CD8-positive, alpha-beta memory T cell (primary cell): ENCODE measurements at regions of chr2 and their contacts with region 1.

Region 1: GRCh38 chr2:127197475-127198385 is 22.4 kb downstream of the CYP27C1 start:
- DNase-seq: peak in 4 of 5 donors; percentile 19 to 63 (median 33)
- H3K4me3 ChIP-seq: no peak overlapping the region
- H3K4me3 Mint-ChIP-seq: peak overlapping the region; percentile 68 to 82 (median 79)
- H3K27ac ChIP-seq: no peak overlapping the region
- H3K27ac Mint-ChIP-seq: peak overlapping the region in 1 of 8 donors; percentile 5
- H3K4me1 ChIP-seq: no peaks in the 10 kb centered on the region
- H3K4me1 Mint-ChIP-seq: peaks cover 0 to 6% (median 0%) of the 10 kb centered on the region in 3 donors
- H3K27me3 ChIP-seq: no peaks in the 10 kb centered on the region
- H3K27me3 Mint-ChIP-seq: peaks cover 0 to 8% of the 10 kb centered on the region in 2 donors

Region 2: DNA sequence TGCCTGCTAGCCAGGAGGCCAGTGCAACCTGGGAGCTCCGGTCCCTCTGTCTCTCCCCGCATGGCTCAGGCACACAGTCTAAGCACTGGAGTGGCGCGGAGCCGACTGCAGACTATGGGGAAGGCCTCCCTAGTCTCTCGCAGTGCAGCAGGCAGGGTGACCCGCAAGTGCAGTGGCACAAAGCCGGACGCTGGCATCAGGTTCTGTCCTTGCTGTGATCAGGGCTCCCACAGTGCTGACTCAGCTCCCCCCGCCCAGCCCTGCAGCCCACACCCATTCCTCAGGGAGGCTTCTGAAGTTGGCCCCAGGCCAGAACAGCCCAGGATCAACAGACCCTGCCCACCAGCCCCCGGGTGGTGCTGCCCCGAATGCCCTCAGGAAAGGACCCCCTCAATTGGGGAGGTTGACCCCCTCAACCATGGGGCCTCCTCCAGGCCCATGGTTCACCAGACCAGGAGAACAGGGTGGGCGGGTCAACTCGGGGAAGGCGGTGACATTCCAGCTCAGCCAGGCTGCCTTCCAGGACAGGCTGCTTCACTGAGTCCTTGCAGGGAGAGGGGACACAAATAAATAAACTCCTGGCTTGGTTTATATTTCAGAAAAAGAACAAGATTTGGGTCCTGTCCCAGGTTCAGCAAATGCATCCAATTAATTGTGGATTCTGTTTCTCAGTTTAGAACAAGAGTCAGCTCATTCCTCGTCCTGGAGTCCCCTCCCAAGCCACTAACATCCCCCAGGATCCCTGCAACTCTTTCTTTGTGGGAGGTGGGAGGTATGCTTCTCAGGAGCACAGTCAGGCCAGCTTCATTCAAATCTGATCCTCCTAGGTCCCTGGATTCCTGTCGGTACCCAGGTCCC is 103.0 kb before region 1 on chr2:
- CTCF ChIA-PET with region 1: no interaction called
- POLR2A ChIA-PET with region 1: no interaction called
- DNase-seq: peak in 1 of 5 donors; percentile 42
- H3K4me3 ChIP-seq: no peak overlapping the region
- H3K4me3 Mint-ChIP-seq: no peak overlapping the region
- H3K27ac ChIP-seq: no peak overlapping the region
- H3K27ac Mint-ChIP-seq: no peak overlapping the region
- H3K4me1 ChIP-seq: no peaks in the 10 kb centered on the region
- H3K4me1 Mint-ChIP-seq: no peaks in the 10 kb centered on the region
- H3K27me3 ChIP-seq: no peaks in the 10 kb centered on the region
- H3K27me3 Mint-ChIP-seq: peaks cover 0 to 2% of the 10 kb centered on the region in 2 donors

Region 3: DNA sequence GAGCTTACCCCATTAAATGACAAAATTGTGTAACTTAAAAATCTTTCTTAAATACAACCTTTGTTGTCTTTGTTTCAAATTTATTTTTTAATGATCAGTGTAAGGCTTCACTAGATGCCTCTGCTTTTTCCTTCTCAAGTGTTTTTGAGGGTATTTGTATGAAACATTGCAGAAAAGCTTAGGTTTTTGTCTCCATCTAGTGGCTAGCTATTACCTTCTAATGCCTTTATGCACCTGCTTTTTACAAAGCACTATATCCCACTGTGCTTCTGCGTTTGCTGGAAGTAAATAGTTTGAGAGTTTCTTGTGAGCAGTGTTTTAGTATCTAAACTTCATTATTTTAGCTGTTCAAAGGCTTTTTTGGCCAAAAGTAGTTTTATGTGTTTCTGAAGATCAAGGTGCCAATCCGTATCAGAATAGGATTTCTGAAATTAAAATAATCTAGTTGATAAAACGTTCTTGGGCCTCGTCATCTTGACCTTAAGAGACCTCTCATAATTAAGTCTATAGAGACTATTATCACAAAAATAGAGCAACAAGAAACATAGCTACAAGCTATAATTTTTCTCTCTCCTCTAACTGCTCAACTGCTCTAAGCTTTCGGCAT is 281.6 kb after region 1 on chr2:
- CTCF ChIA-PET with region 1: interaction called, 14 read pairs
- POLR2A ChIA-PET with region 1: no interaction called
- DNase-seq: peak in 2 of 5 donors; percentile 11 to 21
- H3K4me3 ChIP-seq: no peak overlapping the region
- H3K4me3 Mint-ChIP-seq: no peak overlapping the region
- H3K27ac ChIP-seq: no peak overlapping the region
- H3K27ac Mint-ChIP-seq: peak overlapping the region in 1 of 8 donors; percentile 30
- H3K4me1 ChIP-seq: no peaks in the 10 kb centered on the region
- H3K4me1 Mint-ChIP-seq: peaks cover 0 to under 1% (median 0%) of the 10 kb centered on the region in 3 donors
- H3K27me3 ChIP-seq: no peaks in the 10 kb centered on the region
- H3K27me3 Mint-ChIP-seq: peaks cover 0 to 2% of the 10 kb centered on the region in 2 donors